Endothelial cell of umbilical vein (primary cell): ENCODE measurements at regions of chr6 and their contacts with region 1.

Region 1: DNA sequence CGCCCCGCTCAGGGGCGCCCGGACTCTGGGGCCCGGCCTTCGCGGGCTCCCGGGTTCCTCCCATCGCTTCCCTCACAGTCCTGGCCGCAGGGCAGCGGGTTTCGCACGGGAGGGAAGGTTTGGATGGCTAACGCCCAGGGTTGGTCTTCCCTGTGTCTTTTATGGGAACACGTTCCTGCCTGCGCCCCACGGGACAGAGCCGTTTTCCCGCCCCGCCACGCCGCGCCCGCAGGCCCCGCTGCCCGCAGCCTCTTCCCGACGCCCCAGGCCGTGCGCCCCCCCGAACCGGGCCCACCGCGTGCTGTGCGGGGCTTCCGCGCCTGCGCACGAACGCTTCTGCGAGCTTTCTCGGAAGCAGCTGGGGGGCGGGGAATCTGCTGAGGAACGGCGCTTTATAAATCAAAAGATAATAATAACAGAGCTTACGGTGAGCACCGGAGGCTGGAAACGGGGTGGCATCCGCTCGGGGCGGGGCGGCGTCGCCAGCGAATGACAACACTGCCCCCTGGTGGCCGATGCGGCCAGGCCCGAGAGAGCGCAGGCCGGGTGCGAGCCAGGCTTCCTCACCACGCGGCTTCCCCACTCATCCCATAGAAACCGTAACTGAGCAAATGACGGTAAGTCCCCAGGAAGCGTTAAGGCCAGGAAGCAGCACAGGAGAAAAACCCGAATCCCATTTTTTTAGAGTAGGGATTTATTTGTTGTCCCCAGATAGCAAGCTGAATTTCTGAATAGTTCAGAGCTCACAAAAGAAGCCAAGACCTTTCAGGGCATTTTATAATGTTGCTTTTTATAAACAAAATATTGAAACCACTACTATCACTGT is 116.4 kb downstream of the MYLK4 start:
- DNase-seq: peak; percentile 93
- H3K4me3 ChIP-seq: peak overlapping the region in 2 of 3 experiments; percentile 13 to 15
- H3K27ac ChIP-seq: peak overlapping the region; percentile 44
- H3K4me1 ChIP-seq: peaks cover 15% of the 10 kb centered on the region
- H3K27me3 ChIP-seq: no peaks in the 10 kb centered on the region
- CTCF ChIP-seq: peak; percentile 98 to 99
- POLR2A ChIP-seq: no peak

Region 2: GRCh38 chr6:1686117-1687098 is 947.9 kb before region 1 on chr6:
- CTCF ChIA-PET with region 1: interaction called, 5 read pairs
- POLR2A ChIA-PET with region 1: no interaction called
- dilution Hi-C with region 1: no loop called
- intact Hi-C with region 1: loop called (anchors 10 kb)
- DNase-seq: peak; percentile 71
- H3K4me3 ChIP-seq: no peak overlapping the region
- H3K27ac ChIP-seq: no peak overlapping the region
- H3K4me1 ChIP-seq: peaks cover 13% of the 10 kb centered on the region
- H3K27me3 ChIP-seq: no peaks in the 10 kb centered on the region
- CTCF ChIP-seq: peak; percentile 12 to 26
- POLR2A ChIP-seq: no peak

Region 3: DNA sequence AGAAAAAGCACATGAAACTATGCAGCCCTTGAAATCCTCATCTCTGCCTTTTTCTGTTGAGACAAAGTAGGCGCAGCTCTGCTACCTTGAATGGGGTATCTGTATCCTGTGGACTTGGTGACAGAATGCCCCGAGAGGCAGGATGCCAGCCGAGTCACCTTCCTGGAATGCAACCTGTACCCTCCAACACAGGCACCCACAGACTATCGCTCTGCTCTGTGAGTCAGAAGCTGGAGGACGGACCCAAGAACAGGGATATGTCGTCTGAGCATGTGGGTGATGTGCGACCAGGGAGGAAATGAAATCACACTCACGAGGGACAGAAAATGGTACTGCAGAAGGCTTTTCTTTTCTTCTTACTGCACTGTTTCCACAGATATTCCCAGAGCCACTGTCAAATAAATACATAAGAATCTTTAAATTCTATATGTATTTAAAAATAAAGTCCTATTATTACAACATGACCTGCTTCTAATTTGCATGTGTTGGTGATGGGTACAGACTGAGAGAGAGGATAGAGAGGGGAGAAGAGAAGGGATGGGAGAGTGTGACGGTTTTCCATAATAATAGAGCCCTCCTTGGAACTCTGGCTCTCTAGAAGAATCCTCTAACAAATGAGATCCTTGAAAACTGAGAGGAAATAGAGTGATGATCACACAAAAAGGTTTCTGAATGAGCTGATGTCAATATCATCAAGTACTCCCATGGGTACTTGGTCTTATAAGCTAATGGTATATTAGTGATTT is 716.6 kb before region 1 on chr6:
- CTCF ChIA-PET with region 1: no interaction called
- POLR2A ChIA-PET with region 1: no interaction called
- dilution Hi-C with region 1: no loop called
- intact Hi-C with region 1: loop called (anchors 10 kb)
- DNase-seq: peak; percentile 86
- H3K4me3 ChIP-seq: no peak overlapping the region
- H3K27ac ChIP-seq: peak overlapping the region; percentile 75
- H3K4me1 ChIP-seq: peaks cover 18% of the 10 kb centered on the region
- H3K27me3 ChIP-seq: no peaks in the 10 kb centered on the region
- CTCF ChIP-seq: no peak
- POLR2A ChIP-seq: no peak

Region 4: GRCh38 chr6:2209226-2209809 is 425.0 kb before region 1 on chr6:
- CTCF ChIA-PET with region 1: interaction called, 24 read pairs
- POLR2A ChIA-PET with region 1: no interaction called
- dilution Hi-C with region 1: no loop called
- intact Hi-C with region 1: no loop called
- DNase-seq: peak; percentile 64
- H3K4me3 ChIP-seq: no peak overlapping the region
- H3K27ac ChIP-seq: no peak overlapping the region
- H3K4me1 ChIP-seq: no peaks in the 10 kb centered on the region
- H3K27me3 ChIP-seq: no peaks in the 10 kb centered on the region
- CTCF ChIP-seq: peak; percentile 42 to 75
- POLR2A ChIP-seq: no peak

Region 5: GRCh38 chr6:2448820-2449571 is 185.4 kb before region 1 on chr6:
- CTCF ChIA-PET with region 1: interaction called, 48 read pairs
- POLR2A ChIA-PET with region 1: interaction called, 5 read pairs
- dilution Hi-C with region 1: no loop called
- intact Hi-C with region 1: loop called (anchors 1 kb)
- DNase-seq: peak; percentile 86
- H3K4me3 ChIP-seq: peak overlapping the region in 2 of 3 experiments; percentile 4 to 64
- H3K27ac ChIP-seq: no peak overlapping the region
- H3K4me1 ChIP-seq: peaks cover 4% of the 10 kb centered on the region
- H3K27me3 ChIP-seq: peaks cover under 1 to 2% of the 10 kb centered on the region in 2 experiments
- CTCF ChIP-seq: peak; percentile 60 to 69
- POLR2A ChIP-seq: no peak

Region 6: GRCh38 chr6:2622671-2623070 is 11.7 kb before region 1 on chr6:
- CTCF ChIA-PET with region 1: interaction called, 15 read pairs
- POLR2A ChIA-PET with region 1: no interaction called
- dilution Hi-C with region 1: no loop called
- intact Hi-C with region 1: no loop called
- DNase-seq: no peak
- H3K4me3 ChIP-seq: no peak overlapping the region
- H3K27ac ChIP-seq: no peak overlapping the region
- H3K4me1 ChIP-seq: peaks cover 9% of the 10 kb centered on the region
- H3K27me3 ChIP-seq: no peaks in the 10 kb centered on the region
- CTCF ChIP-seq: no peak
- POLR2A ChIP-seq: no peak

Region 7: GRCh38 chr6:2799936-2800527 is 165.7 kb after region 1 on chr6:
- CTCF ChIA-PET with region 1: no interaction called
- POLR2A ChIA-PET with region 1: no interaction called
- dilution Hi-C with region 1: no loop called
- intact Hi-C with region 1: no loop called
- DNase-seq: peak; percentile 87
- H3K4me3 ChIP-seq: no peak overlapping the region
- H3K27ac ChIP-seq: no peak overlapping the region
- H3K4me1 ChIP-seq: peaks cover 19% of the 10 kb centered on the region
- H3K27me3 ChIP-seq: no peaks in the 10 kb centered on the region
- CTCF ChIP-seq: no peak
- POLR2A ChIP-seq: no peak

Region 8: DNA sequence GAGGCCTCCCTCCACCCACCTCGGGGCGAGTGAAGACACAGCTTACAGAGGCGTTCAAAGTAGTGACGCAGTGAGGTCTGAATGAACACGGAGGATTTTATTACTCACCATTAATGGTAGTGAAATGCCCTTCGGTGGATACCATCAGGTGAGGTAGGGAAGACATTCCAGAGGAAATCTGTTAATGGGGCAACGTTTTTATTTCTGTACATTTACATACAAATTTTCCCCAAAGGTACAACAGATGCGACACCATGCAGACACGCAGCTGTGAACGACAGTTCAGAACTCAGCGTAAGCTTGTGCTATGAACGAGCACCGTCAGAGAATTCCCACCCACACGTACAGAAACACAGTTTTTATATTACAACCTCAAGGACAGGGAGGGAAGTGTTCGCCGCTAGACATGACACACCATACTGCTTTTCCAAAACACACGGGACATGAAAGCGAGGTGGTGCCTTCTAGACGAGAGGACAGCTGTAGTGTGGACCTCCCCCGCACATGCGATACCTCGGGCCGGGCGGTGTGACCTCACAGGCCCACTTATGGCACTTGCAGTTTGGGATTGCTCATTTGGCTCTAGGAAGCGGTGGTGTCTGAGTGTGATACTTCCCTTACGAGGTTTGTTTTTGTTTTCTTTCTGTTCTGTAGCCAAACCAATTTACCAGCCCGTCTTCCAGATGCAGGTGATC is 635.1 kb after region 1 on chr6:
- CTCF ChIA-PET with region 1: no interaction called
- POLR2A ChIA-PET with region 1: no interaction called
- dilution Hi-C with region 1: no loop called
- intact Hi-C with region 1: no loop called
- DNase-seq: no peak
- H3K4me3 ChIP-seq: no peak overlapping the region
- H3K27ac ChIP-seq: no peak overlapping the region
- H3K4me1 ChIP-seq: no peaks in the 10 kb centered on the region
- H3K27me3 ChIP-seq: no peaks in the 10 kb centered on the region
- CTCF ChIP-seq: no peak
- POLR2A ChIP-seq: no peak